AG04449 (cell line): ENCODE measurements at regions of chr21 and their contacts with region 1.

Region 1: GRCh38 chr21:32257962-32258785 is 20.7 kb downstream of the MIS18A start:
- DNase-seq: peak; percentile 24
- H3K4me3 ChIP-seq: no peak overlapping the region
- CTCF ChIP-seq: peak; percentile 71

Region 2: GRCh38 chr21:31781737-31782136 is 476.4 kb before region 1 on chr21:
- CTCF ChIA-PET with region 1: interaction called, 81 read pairs
- POLR2A ChIA-PET with region 1: no interaction called
- DNase-seq: no peak
- H3K4me3 ChIP-seq: no peak overlapping the region
- CTCF ChIP-seq: no peak

Region 3: DNA sequence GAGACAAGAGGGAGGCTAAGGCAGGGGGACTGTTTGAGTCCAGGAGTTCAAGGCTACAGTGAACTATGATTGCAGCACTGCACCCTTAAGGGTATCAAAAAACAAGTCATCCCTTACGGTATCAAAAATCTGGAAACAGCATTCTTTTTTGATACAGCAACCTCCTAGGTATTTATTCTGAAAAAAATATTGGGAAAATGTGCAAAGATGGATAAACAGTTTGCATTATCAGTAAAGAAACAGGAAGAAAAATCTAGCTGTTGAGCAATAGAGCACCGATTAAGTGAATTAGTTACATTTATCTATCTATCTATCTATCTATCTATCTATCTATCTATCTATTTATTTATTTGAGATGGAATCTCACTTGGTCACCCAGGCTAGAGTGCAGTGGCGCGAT is 469.6 kb before region 1 on chr21:
- CTCF ChIA-PET with region 1: interaction called, 81 read pairs
- POLR2A ChIA-PET with region 1: no interaction called
- DNase-seq: no peak
- H3K4me3 ChIP-seq: no peak overlapping the region
- CTCF ChIP-seq: no peak

Region 4: DNA sequence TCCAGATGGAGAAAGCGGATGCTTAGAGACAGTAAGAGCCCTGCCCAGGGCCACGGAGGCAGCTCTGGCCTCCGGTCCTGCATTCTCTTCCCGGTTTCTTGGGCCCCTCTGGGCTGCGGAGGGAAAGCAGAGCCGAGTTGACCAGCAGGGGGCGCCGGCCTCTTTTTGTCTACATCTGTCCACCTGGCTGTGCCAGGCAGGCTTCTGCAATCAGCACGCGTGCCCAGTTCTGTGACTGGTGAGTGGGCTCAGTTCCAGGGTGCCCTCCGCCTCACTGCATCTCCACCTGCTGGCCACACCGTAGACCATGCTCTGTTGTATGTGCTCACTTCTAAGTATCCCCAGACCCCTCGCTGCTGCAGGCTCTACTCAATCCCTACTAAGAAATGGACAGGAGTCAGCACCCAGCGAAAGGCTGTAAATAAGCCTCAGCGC is 392.1 kb before region 1 on chr21:
- CTCF ChIA-PET with region 1: interaction called, 302 read pairs
- POLR2A ChIA-PET with region 1: no interaction called
- DNase-seq: no peak
- H3K4me3 ChIP-seq: no peak overlapping the region
- CTCF ChIP-seq: peak; percentile 84

Region 5: DNA sequence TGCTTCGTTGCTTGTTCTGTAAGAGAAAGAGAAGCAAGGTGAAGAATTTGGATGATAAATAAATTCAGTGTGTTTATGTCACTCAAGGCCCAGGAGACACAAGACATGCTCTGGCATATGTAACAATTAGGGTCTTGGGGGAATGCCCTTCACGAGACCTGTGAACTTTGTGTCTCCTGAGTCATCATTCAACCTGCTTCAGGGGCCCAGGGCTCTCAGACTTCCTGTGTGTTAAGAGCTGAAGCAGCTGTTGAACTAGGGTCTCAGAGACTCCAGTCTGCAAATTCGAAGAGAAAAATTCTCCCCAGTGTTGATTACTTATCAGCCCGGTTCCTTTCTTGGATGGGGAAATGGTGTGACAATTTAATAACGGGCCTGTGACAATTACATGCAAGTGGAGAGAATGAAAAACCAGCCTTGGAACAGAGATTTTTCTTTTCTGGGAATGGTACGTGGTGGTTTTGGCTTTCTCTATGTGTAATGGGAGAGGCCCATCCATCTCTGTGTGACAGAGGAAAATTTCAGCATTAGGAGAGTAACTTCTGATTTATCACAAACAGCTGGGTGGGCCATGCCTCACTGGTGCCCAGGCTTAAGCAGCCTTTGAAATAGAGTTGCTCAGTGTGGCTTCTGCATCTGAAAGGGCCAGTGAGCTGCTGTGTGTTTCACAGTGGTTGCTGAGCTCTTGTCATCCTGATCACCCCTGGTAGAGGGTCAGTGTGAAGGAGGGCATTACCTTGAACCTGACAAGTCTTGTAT is 362.9 kb before region 1 on chr21:
- CTCF ChIA-PET with region 1: interaction called, 10 read pairs
- POLR2A ChIA-PET with region 1: no interaction called
- DNase-seq: no peak
- H3K4me3 ChIP-seq: no peak overlapping the region
- CTCF ChIP-seq: no peak

Region 6: GRCh38 chr21:32270748-32271147 is 12.6 kb after region 1 on chr21:
- CTCF ChIA-PET with region 1: interaction called, 15 read pairs
- POLR2A ChIA-PET with region 1: no interaction called
- DNase-seq: no peak
- H3K4me3 ChIP-seq: no peak overlapping the region
- CTCF ChIP-seq: no peak